ENCODE measurements at regions of chr10 and their contacts with region 1.

Region 1: GRCh38 chr10:74344306-74344705 is 193.3 kb downstream of the ADK start:
- DNase-seq: no peak
- ATAC-seq: no peak
- H3K4me3 ChIP-seq: no peak overlapping the region
- H3K4me3 Mint-ChIP-seq: no peak overlapping the region
- H3K27ac ChIP-seq: no peak overlapping the region
- H3K27ac Mint-ChIP-seq: no peak overlapping the region
- H3K4me1 ChIP-seq: no peaks in the 10 kb centered on the region
- H3K4me1 Mint-ChIP-seq: no peaks in the 10 kb centered on the region
- H3K27me3 ChIP-seq: no peaks in the 10 kb centered on the region
- H3K27me3 Mint-ChIP-seq: no peaks in the 10 kb centered on the region
- CTCF ChIP-seq: no peak

Region 2: GRCh38 chr10:74363727-74364126 is 19.4 kb after region 1 on chr10:
- CTCF ChIA-PET with region 1: no interaction called
- POLR2A ChIA-PET with region 1: no interaction called
- intact Hi-C with region 1: loop called (anchors 2 kb)
- DNase-seq: no peak
- ATAC-seq: no peak
- H3K4me3 ChIP-seq: no peak overlapping the region
- H3K4me3 Mint-ChIP-seq: no peak overlapping the region
- H3K27ac ChIP-seq: no peak overlapping the region
- H3K27ac Mint-ChIP-seq: peak overlapping the region; percentile 20
- H3K4me1 ChIP-seq: no peaks in the 10 kb centered on the region
- H3K4me1 Mint-ChIP-seq: peaks cover 12% of the 10 kb centered on the region
- H3K27me3 ChIP-seq: no peaks in the 10 kb centered on the region
- H3K27me3 Mint-ChIP-seq: no peaks in the 10 kb centered on the region
- CTCF ChIP-seq: no peak